Mucosa of descending colon (tissue), 3 donors: ENCODE measurements at regions of chr22 and their contacts with region 1.

Region 1: DNA sequence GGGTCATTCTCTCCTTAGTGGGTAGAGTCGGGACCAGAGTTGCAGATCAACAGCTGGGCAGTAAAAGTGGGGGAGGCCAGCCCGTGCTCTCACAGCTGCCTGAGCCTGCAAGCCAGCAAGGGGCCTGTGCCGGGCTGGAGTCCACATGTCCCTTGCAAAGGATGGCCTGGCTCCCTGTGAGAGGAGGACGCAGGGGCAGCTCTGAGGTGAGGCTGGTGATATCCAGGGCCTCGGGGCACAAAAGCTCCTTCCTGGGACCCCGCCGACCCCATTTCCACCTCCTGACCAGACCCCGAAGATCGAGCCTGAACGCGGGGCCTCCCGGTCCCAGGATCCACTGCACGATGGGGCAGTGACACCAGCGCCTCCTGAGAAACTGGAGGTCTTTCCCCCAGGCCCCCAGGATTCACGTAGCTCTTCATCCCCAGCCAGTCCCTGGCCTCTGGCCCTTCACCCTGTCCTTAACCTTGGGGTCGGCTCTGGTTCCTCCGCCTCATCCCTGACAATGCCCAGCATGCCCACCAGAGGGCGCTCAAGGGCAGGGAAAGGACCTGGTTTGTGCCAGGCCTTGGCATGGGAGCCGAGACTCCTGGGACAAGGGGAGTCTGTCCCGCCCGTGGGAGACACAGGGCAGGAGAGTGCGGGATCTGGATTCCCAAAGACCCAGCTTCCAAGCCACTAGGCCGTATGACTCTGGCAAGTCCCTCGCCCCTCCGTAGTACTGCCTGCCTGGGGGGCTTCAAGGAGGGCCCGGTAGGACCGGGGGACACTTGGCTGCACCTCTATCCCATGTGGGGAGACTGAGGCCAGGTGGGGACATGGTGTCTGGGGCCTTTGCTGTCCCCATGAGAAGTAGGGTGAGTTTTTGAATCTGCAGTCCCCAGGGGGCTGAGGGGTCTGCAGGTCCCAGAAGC is 17.8 kb upstream of the WNT7B start:
- DNase-seq: peak; percentile 84 to 91 (median 85)
- ATAC-seq: peak; percentile 79
- H3K4me3 ChIP-seq: no peak overlapping the region
- H3K4me1 ChIP-seq: peaks cover 19% of the 10 kb centered on the region
- CTCF ChIP-seq: peak; percentile 98

Region 2: GRCh38 chr22:46087336-46088277 is 92.9 kb after region 1 on chr22:
- intact Hi-C with region 1: no loop called
- DNase-seq: peak; percentile 76 to 85 (median 84)
- ATAC-seq: peak; percentile 43
- H3K4me3 ChIP-seq: no peak overlapping the region
- H3K4me1 ChIP-seq: peaks cover 56% of the 10 kb centered on the region
- CTCF ChIP-seq: no peak

Region 3: GRCh38 chr22:46296257-46297150 is 301.8 kb after region 1 on chr22 and contains the start of gene GTSE1:
- intact Hi-C with region 1: loop called in 1 of 2 experiments (anchors 10 kb)
- DNase-seq: peak; percentile 98 to 99 (median 98)
- ATAC-seq: peak; percentile 97
- H3K4me3 ChIP-seq: peak within 1 kb of the TSS; percentile 22
- H3K4me1 ChIP-seq: peaks cover 19% of the 10 kb centered on the region
- CTCF ChIP-seq: peak; percentile 40
- total RNA-seq, gene GTSE1: 1.6 to 10.9 (median 3.6) TPM

Region 4: DNA sequence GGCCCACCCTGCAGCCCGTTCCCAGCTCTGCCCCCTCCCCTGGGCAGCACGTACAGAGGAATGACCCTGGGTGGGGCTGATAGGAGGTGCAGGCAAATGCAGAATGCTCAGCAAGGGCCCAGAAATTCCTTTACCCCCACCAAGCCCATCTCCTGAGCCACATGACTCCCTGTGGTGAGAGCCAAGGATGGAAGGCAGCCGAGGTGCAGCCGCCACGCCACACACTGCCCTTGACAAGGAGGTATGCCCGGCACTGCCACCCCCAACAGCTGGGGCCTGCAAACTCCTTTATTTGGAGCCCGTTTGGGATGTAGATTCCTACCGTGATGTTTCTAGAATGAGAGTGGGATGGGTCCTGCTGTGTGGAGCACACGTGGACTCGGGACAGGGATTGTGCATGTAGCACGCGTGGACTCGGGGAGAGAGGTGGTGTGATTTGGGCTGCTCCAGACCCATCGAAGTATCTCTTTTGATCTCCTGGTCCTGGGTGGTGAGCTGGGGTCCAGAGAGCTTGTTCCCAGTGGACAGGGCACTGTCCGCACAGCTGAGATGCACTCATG is 314.9 kb after region 1 on chr22:
- intact Hi-C with region 1: loop called in 1 of 2 experiments (anchors 10 kb)
- DNase-seq: no peak
- ATAC-seq: no peak
- H3K4me3 ChIP-seq: no peak overlapping the region
- H3K4me1 ChIP-seq: no peaks in the 10 kb centered on the region
- CTCF ChIP-seq: no peak